ENCODE measurements at regions of chr7 and their contacts with region 1.

Region 1: GRCh38 chr7:87404674-87405073 is 59.2 kb downstream of the CROT start:
- DNase-seq: no peak
- H3K4me3 ChIP-seq: no peak overlapping the region
- H3K27ac ChIP-seq: no peak overlapping the region
- H3K4me1 ChIP-seq: no peaks in the 10 kb centered on the region
- CTCF ChIP-seq: no peak

Region 2: DNA sequence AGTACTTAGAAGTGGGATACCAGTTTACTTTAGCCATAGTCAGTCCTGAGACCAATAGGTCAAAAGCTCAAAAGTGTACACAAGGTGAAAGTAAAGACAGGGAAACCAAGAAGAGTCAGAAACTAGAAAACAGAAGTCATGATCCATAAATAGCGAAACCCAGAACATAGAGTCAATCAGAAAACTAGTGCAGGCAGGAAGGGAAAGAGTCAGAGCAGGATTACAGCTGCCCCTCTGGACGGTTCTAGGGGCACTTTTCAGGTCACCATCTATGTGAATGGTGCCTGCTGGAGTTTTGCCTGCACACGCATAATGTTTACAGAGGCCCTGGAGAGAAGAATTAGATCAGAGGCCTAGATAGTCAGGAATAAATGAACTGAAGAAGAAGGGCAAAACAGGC is 274.8 kb before region 1 on chr7:
- CTCF ChIA-PET with region 1: no interaction called
- POLR2A ChIA-PET with region 1: no interaction called
- intact Hi-C with region 1: loop called (anchors 10 kb)
- DNase-seq: no peak
- H3K4me3 ChIP-seq: no peak overlapping the region
- H3K27ac ChIP-seq: no peak overlapping the region
- H3K4me1 ChIP-seq: no peaks in the 10 kb centered on the region
- CTCF ChIP-seq: no peak

Measured in OCI-LY7 (cell line).